Astrocyte of the cerebellum (primary cell): ENCODE measurements at regions of chr1 and their contacts with region 1.

Region 1: DNA sequence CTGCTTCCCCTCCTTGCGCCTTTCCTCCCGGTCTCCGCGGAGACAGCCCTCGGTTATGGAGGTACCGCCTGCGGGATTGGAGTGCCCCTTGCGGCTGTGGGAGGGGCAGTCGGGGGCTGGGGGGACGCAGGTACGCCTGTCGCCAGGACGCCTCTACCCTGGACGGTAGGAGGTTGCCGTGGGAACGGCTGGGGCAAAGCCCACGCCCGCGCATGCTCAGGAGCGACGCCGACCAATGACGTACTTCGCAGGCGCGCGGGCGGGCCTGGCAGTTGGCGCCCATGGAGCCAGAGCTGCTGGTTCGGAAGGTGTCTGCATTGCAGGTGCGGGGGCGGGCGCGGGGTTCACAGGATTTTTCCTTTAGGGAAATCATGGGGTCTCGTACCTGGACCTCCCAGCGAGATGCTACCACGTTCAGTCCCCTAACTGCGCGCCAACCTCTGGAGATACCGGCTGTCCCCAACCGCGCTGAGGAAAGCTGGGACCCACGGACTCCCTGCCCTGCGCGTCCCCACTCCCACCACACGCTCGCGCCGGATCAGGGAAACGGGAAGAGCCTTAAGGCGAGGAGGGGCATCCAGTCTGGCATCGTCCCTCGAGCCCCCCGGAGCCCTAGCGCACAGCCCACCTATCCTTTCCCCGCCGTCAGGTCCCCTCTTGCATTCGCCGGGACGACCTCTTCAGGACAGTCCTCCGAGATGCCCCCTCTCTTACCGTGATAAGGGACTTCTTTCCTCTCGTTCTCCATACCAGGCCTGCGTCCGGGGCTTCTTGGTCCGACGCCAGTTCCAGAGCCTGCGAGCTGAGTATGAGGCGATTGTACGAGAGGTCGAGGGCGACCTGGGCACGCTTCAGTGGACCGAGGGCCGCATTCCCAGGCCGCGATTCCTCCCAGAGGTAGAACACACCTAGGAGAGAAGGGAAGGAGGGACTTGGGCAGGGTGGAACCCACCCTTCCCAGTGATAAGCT is at the start of gene IQCC:
- DNase-seq: no peak
- H3K4me3 ChIP-seq: peak within 1 kb of the TSS; percentile 77
- CTCF ChIP-seq: no peak

Region 2: DNA sequence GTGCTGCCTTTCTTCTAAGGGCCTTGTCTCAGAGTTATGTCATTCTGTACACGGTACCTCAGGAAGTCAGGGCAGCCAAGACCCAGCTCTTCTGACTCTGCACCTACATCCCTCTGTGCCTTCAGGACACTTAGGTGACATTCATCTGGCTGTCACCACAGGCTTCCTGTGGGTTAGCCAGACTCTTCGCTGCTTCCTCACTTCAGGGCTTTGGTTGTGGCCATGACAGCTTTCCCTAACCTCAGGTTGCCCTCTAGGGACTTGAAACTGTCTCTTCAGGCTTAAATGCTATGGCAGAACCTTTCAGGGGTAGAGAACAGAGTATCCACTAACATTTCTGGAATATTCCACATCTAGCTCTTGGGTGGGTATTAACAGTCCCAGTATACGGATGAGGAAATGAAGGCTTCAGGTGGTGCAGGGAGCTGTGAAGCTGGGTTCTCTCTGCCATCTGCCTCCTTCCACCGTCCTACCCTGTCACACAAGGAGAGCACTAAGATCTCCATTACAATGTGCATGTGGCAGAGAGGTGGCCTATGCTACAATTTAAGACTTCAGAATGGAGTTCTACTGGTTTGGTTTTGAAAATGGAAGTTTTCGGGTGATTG is 166.6 kb after region 1 on chr1:
- in situ Hi-C with region 1: loop called (anchors 10 kb)
- DNase-seq: no peak
- H3K4me3 ChIP-seq: no peak overlapping the region
- CTCF ChIP-seq: no peak